ENCODE measurements at regions of chr7 and their contacts with region 1.

Region 1: DNA sequence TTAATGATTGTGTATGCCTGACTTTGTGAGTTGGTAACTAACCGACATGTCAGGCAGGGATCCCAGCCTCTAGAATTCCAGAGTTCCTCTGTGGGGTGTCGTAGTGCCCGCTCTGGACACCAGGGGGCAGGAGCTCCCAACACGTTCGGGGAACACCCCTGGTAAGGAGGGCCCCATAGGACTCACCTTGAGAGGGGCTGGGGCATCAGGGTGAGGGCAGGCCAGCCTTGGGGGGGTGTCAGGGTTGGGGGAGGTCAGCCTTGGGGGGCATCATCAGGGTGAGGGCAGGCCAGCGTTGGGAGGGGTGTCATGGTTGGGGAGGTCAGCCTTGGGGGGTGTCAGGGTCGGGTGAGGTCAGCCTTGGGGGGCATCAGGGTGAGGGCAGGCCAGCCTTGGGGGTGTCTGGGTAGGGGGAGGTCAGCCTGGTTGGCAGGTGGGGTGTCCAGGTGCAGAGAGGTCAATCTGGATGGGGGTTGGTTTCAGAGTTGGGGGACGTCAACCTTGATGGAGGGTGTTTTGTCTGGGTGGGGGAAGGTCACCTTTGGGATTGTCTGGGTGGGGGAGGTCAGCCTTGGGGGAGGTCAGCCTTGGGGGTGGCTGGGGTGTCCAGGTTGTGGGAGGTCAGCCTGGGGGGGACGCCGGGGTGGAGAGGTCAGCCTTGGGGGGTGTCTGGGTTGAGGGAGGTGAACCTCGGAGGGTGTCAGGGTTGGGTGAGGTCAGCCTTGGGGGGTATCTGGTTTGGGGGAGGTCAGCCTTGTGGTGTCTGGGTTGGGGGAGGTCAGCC is 45.6 kb upstream of the SUN1 start:
- DNase-seq: peak; percentile 73 to 81
- H3K4me3 ChIP-seq: no peak overlapping the region
- H3K27ac ChIP-seq: no peak overlapping the region
- H3K4me1 ChIP-seq: peaks cover 0 to 8% of the 10 kb centered on the region in 2 donors
- H3K27me3 ChIP-seq: no peaks in the 10 kb centered on the region
- CTCF ChIP-seq: peak; percentile 39 to 87 (median 84)
- POLR2A ChIP-seq: no peak

Region 2: GRCh38 chr7:650339-651031 is 136.2 kb before region 1 on chr7:
- intact Hi-C with region 1: no loop called
- DNase-seq: no peak
- H3K4me3 ChIP-seq: no peak overlapping the region
- H3K27ac ChIP-seq: no peak overlapping the region
- H3K4me1 ChIP-seq: no peaks in the 10 kb centered on the region
- H3K27me3 ChIP-seq: no peaks in the 10 kb centered on the region
- CTCF ChIP-seq: no peak
- POLR2A ChIP-seq: no peak

Region 3: GRCh38 chr7:831596-832166 is 45.0 kb after region 1 on chr7:
- intact Hi-C with region 1: loop called (anchors 10 kb)
- DNase-seq: peak; percentile 40 to 50
- H3K4me3 ChIP-seq: no peak overlapping the region
- H3K27ac ChIP-seq: peak overlapping the region; percentile 91 to 99 (median 95)
- H3K4me1 ChIP-seq: peaks cover 34 to 61% of the 10 kb centered on the region in 2 donors
- H3K27me3 ChIP-seq: no peaks in the 10 kb centered on the region
- CTCF ChIP-seq: no peak
- POLR2A ChIP-seq: peak in 1 of 2 donors; percentile 55

Region 4: GRCh38 chr7:873367-874002 is 86.8 kb after region 1 on chr7:
- intact Hi-C with region 1: loop called (anchors 2 kb)
- DNase-seq: peak; percentile 88 to 89
- H3K4me3 ChIP-seq: no peak overlapping the region
- H3K27ac ChIP-seq: peak overlapping the region in 2 of 3 donors; percentile 24 to 40
- H3K4me1 ChIP-seq: peaks cover 13 to 23% of the 10 kb centered on the region in 2 donors
- H3K27me3 ChIP-seq: no peaks in the 10 kb centered on the region
- CTCF ChIP-seq: peak; percentile 83 to 98 (median 94)
- POLR2A ChIP-seq: no peak

Region 5: DNA sequence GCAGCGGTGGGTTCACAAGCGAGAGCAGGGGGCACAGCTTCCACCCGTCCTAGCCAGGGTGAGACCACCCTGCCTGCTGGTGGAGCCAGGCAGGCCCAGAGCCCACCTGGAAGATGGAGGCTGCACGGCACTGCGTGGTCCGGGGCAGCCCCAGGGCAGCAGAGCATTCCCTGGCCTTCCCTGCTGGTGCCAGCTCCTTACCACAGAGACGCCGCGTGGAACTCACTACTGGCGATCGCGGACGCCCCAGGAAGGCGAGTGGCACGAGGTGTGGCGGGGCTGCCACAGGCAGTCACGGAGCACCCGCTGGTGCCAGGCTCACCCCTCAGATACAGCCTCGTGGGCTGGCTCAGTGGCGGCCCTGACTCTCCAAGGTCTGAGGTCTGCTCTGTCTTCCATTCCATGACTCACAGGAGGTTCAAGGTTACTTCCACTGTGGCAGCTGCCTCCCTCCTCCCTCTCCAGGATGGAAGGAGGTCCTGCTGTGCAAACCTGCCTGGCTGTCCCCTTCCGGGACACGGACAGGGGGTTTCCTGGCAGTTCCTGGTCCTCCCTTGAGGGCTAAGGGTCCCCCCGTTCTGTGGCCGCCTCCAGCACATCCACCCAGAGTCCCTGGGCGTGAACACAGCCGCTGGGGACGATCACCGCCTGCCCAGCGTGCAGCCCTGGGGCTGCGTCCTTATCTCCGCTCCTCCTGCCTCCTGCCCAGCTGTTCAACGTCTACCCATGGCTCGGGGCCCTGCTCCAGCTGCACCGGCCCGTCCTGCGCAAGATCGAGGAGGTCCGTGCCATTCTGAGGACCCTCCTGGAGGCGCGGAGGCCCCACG is 199.5 kb after region 1 on chr7:
- intact Hi-C with region 1: loop called (anchors 10 kb)
- DNase-seq: no peak
- H3K4me3 ChIP-seq: no peak overlapping the region
- H3K27ac ChIP-seq: no peak overlapping the region
- H3K4me1 ChIP-seq: peaks cover 0 to 11% of the 10 kb centered on the region in 2 donors
- H3K27me3 ChIP-seq: no peaks in the 10 kb centered on the region
- CTCF ChIP-seq: no peak
- POLR2A ChIP-seq: no peak

Measured in thyroid gland (tissue), 4 donors.